GM12878 (cell line): ENCODE measurements at regions of chr3 and their contacts with region 1.

Region 1: DNA sequence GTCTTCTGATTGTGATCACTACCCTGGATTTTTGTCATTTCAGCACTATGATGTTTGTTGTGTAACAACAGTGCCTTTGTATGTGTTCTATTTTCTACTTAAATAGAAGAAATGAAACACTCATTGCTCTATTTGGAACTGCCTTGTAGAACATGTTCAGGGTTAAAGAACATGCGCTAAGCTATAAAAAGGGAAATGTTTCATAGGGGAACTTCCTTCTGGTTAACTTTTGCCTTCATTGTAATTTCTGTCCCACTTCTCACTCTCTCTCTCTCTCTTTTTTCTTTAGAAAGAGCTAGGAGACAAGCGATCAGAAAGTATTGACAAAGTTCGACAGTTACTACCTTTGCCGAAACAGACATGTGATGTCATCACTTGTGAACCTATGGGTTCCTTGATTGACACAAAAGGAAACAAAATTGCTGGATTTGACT is at the start of gene P2RY12:
- DNase-seq: peak; percentile 36
- ATAC-seq: peak; percentile 73
- H3K4me3 ChIP-seq: peak within 1 kb of the TSS; percentile 55
- H3K27ac ChIP-seq: 0 out of 2 replicates have a peak within 1 kb of the TSS, but pooled peaks have one; percentile 9
- H3K4me1 ChIP-seq: peaks cover 16% of the 10 kb centered on the region; the same call in 1 of the 2 replicates
- H3K27me3 ChIP-seq: no peaks in the 10 kb centered on the region
- CTCF ChIP-seq: no peak
- EP300 ChIP-seq: peak; percentile 61 to 84; a peak in 3 of 4 replicates
- POLR2A ChIP-seq: no peak
- RAD21 ChIP-seq: no peak
- polyA plus RNA-seq, gene P2RY12: 0.27 to 0.85 TPM

Region 2: DNA sequence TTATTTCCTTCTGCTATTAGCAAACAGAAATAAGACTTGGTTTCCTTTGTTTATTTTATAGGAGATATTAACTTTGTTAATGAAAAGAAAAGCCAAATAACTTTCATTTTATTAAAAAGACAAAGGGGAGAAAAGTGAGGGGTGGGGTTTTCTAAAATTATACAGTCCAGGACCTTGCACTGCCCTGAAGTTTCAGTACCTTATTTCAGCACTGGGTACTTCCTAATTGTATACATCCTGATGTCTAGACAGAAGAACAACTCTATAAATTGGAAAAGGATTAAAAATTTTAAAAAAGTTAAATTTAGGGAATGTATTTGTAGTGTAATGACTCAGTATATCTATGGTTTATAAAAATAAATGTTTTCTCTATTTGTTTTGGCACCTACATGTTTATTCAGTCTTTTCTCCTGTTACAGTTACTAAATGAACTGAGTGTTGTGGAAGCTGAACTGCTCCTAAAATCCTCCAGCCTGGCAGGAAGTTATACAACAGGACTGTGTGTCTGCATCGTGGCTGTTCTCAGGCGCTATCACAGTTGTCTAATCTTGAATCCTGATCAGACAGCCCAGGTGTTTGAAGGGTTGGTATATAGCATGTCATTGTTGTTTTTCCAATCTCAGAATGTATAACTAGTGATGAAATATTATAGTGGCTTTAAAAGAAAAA is 27.8 kb before region 1 on chr3:
- CTCF ChIA-PET with region 1: interaction called, 9 read pairs
- POLR2A ChIA-PET with region 1: interaction called, 3 read pairs
- RAD21 ChIA-PET with region 1: interaction called, 5 read pairs
- SMC1A ChIA-PET with region 1: interaction called, 15 read pairs
- in situ Hi-C with region 1: no loop called
- intact Hi-C with region 1: no loop called
- DNase-seq: no peak
- ATAC-seq: peak; percentile 56; the same call in 2 of the 3 replicates
- H3K4me3 ChIP-seq: no peak overlapping the region
- H3K27ac ChIP-seq: no peak overlapping the region
- H3K4me1 ChIP-seq: peaks cover 11% of the 10 kb centered on the region
- H3K27me3 ChIP-seq: no peaks in the 10 kb centered on the region
- CTCF ChIP-seq: no peak
- EP300 ChIP-seq: no peak
- POLR2A ChIP-seq: no peak
- RAD21 ChIP-seq: no peak

Region 3: DNA sequence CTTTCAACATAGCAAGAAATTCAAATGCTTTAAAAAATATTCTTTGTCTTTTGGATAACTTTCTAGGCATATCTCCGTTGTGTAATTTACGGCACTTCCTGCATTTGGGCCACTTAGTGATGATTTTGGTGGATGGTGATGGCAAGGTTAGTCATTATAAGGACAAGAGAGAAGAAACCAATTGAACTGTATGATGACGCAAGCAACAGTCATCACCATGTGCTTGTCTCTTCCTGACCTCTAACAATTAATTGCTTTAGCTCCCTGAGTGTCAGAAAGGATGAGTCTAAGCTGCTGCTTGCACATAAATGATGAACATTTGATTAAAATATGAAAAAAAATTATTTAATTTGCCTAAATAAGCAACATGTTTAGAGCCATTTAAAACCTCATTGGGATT is 11.0 kb after region 1 on chr3:
- CTCF ChIA-PET with region 1: interaction called, 39 read pairs
- POLR2A ChIA-PET with region 1: interaction called, 3 read pairs
- RAD21 ChIA-PET with region 1: interaction called, 4 read pairs
- SMC1A ChIA-PET with region 1: interaction called, 39 read pairs
- in situ Hi-C with region 1: no loop called
- intact Hi-C with region 1: no loop called
- DNase-seq: no peak
- ATAC-seq: no peak
- H3K4me3 ChIP-seq: no peak overlapping the region
- H3K27ac ChIP-seq: no peak overlapping the region
- H3K4me1 ChIP-seq: no peaks in the 10 kb centered on the region
- H3K27me3 ChIP-seq: no peaks in the 10 kb centered on the region; a peak in 1 of 4 replicates
- CTCF ChIP-seq: no peak
- EP300 ChIP-seq: no peak
- POLR2A ChIP-seq: no peak
- RAD21 ChIP-seq: no peak